ENCODE measurements at regions of chrX and their contacts with region 1.

Region 1: GRCh38 chrX:111869639-111870034 is 6.3 kb upstream of the TRPC5OS start:
- DNase-seq: peak; percentile 19
- ATAC-seq: peak; percentile 96
- H3K4me3 Mint-ChIP-seq: no peak overlapping the region
- H3K27ac Mint-ChIP-seq: peak overlapping the region; percentile 16; the same call in 1 of the 2 replicates
- H3K4me1 Mint-ChIP-seq: peaks cover 16% of the 10 kb centered on the region
- H3K27me3 Mint-ChIP-seq: no peaks in the 10 kb centered on the region; the same call in 1 of the 2 replicates
- CTCF ChIP-seq: peak; percentile 46

Region 2: GRCh38 chrX:111928456-111928855 is 58.8 kb after region 1 on chrX:
- CTCF ChIA-PET with region 1: no interaction called
- POLR2A ChIA-PET with region 1: no interaction called
- DNase-seq: no peak
- ATAC-seq: no peak; the same call in 1 of the 2 replicates
- H3K4me3 Mint-ChIP-seq: no peak overlapping the region
- H3K27ac Mint-ChIP-seq: no peak overlapping the region
- H3K4me1 Mint-ChIP-seq: peaks cover 13% of the 10 kb centered on the region
- H3K27me3 Mint-ChIP-seq: no peaks in the 10 kb centered on the region; the same call in 1 of the 2 replicates
- CTCF ChIP-seq: no peak

Region 3: GRCh38 chrX:112043997-112044396 is 174.4 kb after region 1 on chrX:
- CTCF ChIA-PET with region 1: interaction called, 25 read pairs
- POLR2A ChIA-PET with region 1: no interaction called
- DNase-seq: no peak
- ATAC-seq: no peak
- H3K4me3 Mint-ChIP-seq: no peak overlapping the region
- H3K27ac Mint-ChIP-seq: no peak overlapping the region
- H3K4me1 Mint-ChIP-seq: peaks cover 19% of the 10 kb centered on the region
- H3K27me3 Mint-ChIP-seq: no peaks in the 10 kb centered on the region; the same call in 1 of the 2 replicates
- CTCF ChIP-seq: peak; percentile 18; the same call in 1 of the 2 replicates